Naive thymus-derived CD4-positive, alpha-beta T cell (primary cell): ENCODE measurements at regions of chr20 and their contacts with region 1.

Region 1: GRCh38 chr20:2651772-2652723 is at the start of gene NOP56:
- DNase-seq: peak; percentile 89 to 100 (median 96)
- ATAC-seq: peak; percentile 98
- H3K4me3 ChIP-seq: peak within 1 kb of the TSS; percentile 82
- H3K4me3 Mint-ChIP-seq: peak within 1 kb of the TSS; percentile 87 to 92 (median 90)
- H3K27ac ChIP-seq: peak within 1 kb of the TSS; percentile 90
- H3K27ac Mint-ChIP-seq: peak within 1 kb of the TSS; percentile 85 to 94 (median 90)
- H3K4me1 ChIP-seq: peaks cover 22 to 26% of the 10 kb centered on the region in 2 donors
- H3K4me1 Mint-ChIP-seq: peaks cover 16 to 53% (median 39%) of the 10 kb centered on the region in 7 donors
- H3K27me3 ChIP-seq: no peaks in the 10 kb centered on the region
- H3K27me3 Mint-ChIP-seq: no peaks in the 10 kb centered on the region
- total RNA-seq, gene NOP56: 216 to 375 (median 287) TPM

Region 2: GRCh38 chr20:1392823-1393506 is 1259.1 kb before region 1 on chr20 and contains the start of gene FKBP1A:
- CTCF ChIA-PET with region 1: no interaction called
- POLR2A ChIA-PET with region 1: no interaction called
- intact Hi-C with region 1: loop called in 1 of 2 experiments (anchors 5 kb)
- DNase-seq: peak; percentile 80 to 92 (median 89)
- ATAC-seq: peak; percentile 96
- H3K4me3 ChIP-seq: peak within 1 kb of the TSS; percentile 74
- H3K4me3 Mint-ChIP-seq: peak within 1 kb of the TSS; percentile 79 to 98 (median 94)
- H3K27ac ChIP-seq: peak within 1 kb of the TSS; percentile 82
- H3K27ac Mint-ChIP-seq: peak within 1 kb of the TSS; percentile 91 to 99 (median 96)
- H3K4me1 ChIP-seq: peaks cover 39 to 44% of the 10 kb centered on the region in 2 donors
- H3K4me1 Mint-ChIP-seq: peaks cover 45 to 82% (median 75%) of the 10 kb centered on the region in 7 donors
- H3K27me3 ChIP-seq: no peaks in the 10 kb centered on the region
- H3K27me3 Mint-ChIP-seq: peaks cover 0 to 30% (median 0%) of the 10 kb centered on the region in 5 donors
- total RNA-seq, gene FKBP1A: 74.5 to 253 (median 93.1) TPM

Region 3: GRCh38 chr20:2470423-2471193 is 181.4 kb before region 1 on chr20 and contains the start of gene SNRPB:
- CTCF ChIA-PET with region 1: no interaction called
- POLR2A ChIA-PET with region 1: interaction called, 19 read pairs
- intact Hi-C with region 1: loop called (anchors 1 kb)
- DNase-seq: peak; percentile 87 to 97 (median 96)
- ATAC-seq: peak; percentile 97
- H3K4me3 ChIP-seq: peak within 1 kb of the TSS; percentile 70
- H3K4me3 Mint-ChIP-seq: peak within 1 kb of the TSS; percentile 88 to 99 (median 98)
- H3K27ac ChIP-seq: peak within 1 kb of the TSS; percentile 93
- H3K27ac Mint-ChIP-seq: peak within 1 kb of the TSS; percentile 91 to 100 (median 98)
- H3K4me1 ChIP-seq: peaks cover 17 to 18% of the 10 kb centered on the region in 2 donors
- H3K4me1 Mint-ChIP-seq: peaks cover 27 to 45% (median 39%) of the 10 kb centered on the region in 7 donors
- H3K27me3 ChIP-seq: no peaks in the 10 kb centered on the region
- H3K27me3 Mint-ChIP-seq: peaks cover 0 to 2% (median 0%) of the 10 kb centered on the region in 5 donors
- total RNA-seq, gene SNRPB: 83.5 to 323 (median 118) TPM

Region 4: GRCh38 chr20:2523919-2524708 is 127.9 kb before region 1 on chr20:
- CTCF ChIA-PET with region 1: no interaction called
- POLR2A ChIA-PET with region 1: interaction called, 7 read pairs
- intact Hi-C with region 1: loop called (anchors 1 to 2 kb)
- DNase-seq: peak; percentile 82 to 97 (median 91)
- ATAC-seq: peak; percentile 96
- H3K4me3 ChIP-seq: peak overlapping the region; percentile 92
- H3K4me3 Mint-ChIP-seq: peak overlapping the region; percentile 80 to 94 (median 90)
- H3K27ac ChIP-seq: peak overlapping the region; percentile 76
- H3K27ac Mint-ChIP-seq: peak overlapping the region; percentile 62 to 94 (median 86)
- H3K4me1 ChIP-seq: peaks cover 0 to 5% of the 10 kb centered on the region in 2 donors
- H3K4me1 Mint-ChIP-seq: peaks cover 6 to 24% (median 10%) of the 10 kb centered on the region in 7 donors
- H3K27me3 ChIP-seq: no peaks in the 10 kb centered on the region
- H3K27me3 Mint-ChIP-seq: peaks cover 0 to 4% (median 0%) of the 10 kb centered on the region in 5 donors

Region 5: DNA sequence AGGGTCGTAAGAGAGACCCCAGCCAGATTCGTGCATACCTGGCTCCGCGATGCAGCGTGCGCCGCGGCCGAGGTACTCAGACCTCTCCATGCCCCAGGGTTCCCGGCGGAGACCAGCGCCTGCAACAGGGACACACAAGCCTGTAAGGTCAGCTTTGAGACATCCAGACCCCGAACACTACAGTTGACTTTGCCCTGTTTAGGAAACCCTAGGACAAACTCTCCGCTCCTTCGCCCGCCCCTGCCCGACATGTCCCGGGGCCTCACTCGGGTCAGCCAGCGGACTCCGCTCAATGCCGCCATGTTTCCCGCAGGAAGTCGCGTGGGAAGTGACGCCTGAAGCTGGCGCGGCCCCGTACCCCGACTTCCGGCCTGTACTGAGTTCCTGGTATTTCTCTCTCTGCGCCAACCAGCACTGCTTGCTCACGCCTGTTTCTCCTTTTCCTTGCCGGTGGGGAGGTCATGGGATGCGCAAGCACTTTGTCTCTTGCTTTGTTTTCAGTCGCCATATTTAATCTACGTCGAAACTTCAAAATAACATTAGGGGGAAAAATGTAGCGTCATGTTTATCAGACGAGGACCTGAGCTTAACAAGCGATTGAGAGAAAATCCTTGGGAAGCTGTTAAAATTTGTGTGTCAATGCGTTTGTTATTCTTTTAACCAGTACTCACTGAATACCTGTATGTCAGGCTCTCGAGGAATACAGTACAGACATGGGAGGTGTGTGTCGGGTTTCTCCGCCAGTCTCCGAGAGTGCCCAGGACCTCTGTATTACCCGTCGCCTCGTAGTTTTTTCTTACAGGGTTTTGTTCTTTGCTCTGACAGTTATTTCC is 12.1 kb after region 1 on chr20 and contains the start of gene IDH3B:
- CTCF ChIA-PET with region 1: no interaction called
- POLR2A ChIA-PET with region 1: interaction called, 183 read pairs
- intact Hi-C with region 1: loop called (anchors 1 kb)
- DNase-seq: peak; percentile 76 to 94 (median 90)
- ATAC-seq: peak; percentile 99
- H3K4me3 ChIP-seq: peak within 1 kb of the TSS; percentile 89
- H3K4me3 Mint-ChIP-seq: peak within 1 kb of the TSS; percentile 87 to 97 (median 94)
- H3K27ac ChIP-seq: peak within 1 kb of the TSS; percentile 87
- H3K27ac Mint-ChIP-seq: peak within 1 kb of the TSS; percentile 94 to 99 (median 97)
- H3K4me1 ChIP-seq: peaks cover 10 to 15% of the 10 kb centered on the region in 2 donors
- H3K4me1 Mint-ChIP-seq: peaks cover 4 to 34% (median 29%) of the 10 kb centered on the region in 7 donors
- H3K27me3 ChIP-seq: no peaks in the 10 kb centered on the region
- H3K27me3 Mint-ChIP-seq: peaks cover 0 to 10% (median 0%) of the 10 kb centered on the region in 5 donors
- total RNA-seq, gene IDH3B: 105 to 161 (median 107) TPM

Region 6: DNA sequence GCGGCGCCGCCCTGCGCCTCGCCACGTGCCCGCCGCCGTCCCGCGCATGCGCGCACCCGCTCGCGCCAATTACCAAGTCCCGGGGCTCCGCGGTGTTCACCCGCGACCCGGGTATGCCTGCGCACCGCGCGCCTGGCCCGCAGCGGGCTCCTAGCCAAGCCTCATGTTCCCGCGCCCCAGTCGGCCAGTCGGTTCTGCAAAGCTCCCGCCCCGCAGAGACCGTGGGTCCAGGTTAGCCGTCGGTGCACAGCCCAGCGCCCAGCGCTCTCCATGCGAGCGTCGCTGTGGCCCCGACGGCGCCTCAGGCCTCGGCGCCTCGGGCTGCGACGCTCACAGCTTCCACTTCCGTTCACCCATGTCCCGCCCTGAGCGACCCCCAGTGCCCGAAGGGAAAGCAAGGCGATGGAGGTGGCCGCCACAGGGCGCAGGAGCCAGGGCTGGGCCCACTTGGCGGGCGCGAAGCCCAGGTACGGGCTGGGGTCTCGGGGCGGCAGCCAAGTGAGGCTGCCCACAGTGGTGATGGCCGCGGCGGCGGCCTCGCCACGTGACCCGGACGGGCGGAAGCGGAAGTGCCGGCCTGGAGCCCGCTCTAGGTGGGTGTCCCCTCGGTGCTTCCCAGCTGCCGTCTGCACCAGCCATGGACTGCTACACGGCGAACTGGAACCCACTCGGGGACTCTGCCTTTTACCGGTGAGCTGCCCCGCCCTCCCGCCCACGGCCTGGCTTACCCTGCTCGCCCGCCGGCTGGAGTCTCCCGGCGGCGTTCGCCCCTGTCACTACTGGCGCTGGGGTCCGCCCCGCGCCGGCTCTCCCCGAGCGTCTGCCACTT is 188.3 kb after region 1 on chr20 and contains the starts of genes PCED1A and VPS16:
- CTCF ChIA-PET with region 1: no interaction called
- POLR2A ChIA-PET with region 1: interaction called, 10 read pairs
- intact Hi-C with region 1: loop called in 1 of 2 experiments (anchors 1 kb)
- DNase-seq: peak; percentile 83 to 94 (median 90)
- ATAC-seq: peak; percentile 97
- H3K4me3 ChIP-seq: peak within 1 kb of the TSS; percentile 72
- H3K4me3 Mint-ChIP-seq: peak within 1 kb of the TSS; percentile 83 to 93 (median 90)
- H3K27ac ChIP-seq: peak within 1 kb of the TSS; percentile 77
- H3K27ac Mint-ChIP-seq: peak within 1 kb of the TSS; percentile 67 to 95 (median 92)
- H3K4me1 ChIP-seq: peaks cover 15 to 21% of the 10 kb centered on the region in 2 donors
- H3K4me1 Mint-ChIP-seq: peaks cover 18 to 48% (median 45%) of the 10 kb centered on the region in 7 donors
- H3K27me3 ChIP-seq: no peaks in the 10 kb centered on the region
- H3K27me3 Mint-ChIP-seq: no peaks in the 10 kb centered on the region
- total RNA-seq, gene PCED1A: 27.8 to 105 (median 72.5) TPM
- total RNA-seq, gene VPS16: 45.5 to 62.4 (median 56.1) TPM

Region 7: DNA sequence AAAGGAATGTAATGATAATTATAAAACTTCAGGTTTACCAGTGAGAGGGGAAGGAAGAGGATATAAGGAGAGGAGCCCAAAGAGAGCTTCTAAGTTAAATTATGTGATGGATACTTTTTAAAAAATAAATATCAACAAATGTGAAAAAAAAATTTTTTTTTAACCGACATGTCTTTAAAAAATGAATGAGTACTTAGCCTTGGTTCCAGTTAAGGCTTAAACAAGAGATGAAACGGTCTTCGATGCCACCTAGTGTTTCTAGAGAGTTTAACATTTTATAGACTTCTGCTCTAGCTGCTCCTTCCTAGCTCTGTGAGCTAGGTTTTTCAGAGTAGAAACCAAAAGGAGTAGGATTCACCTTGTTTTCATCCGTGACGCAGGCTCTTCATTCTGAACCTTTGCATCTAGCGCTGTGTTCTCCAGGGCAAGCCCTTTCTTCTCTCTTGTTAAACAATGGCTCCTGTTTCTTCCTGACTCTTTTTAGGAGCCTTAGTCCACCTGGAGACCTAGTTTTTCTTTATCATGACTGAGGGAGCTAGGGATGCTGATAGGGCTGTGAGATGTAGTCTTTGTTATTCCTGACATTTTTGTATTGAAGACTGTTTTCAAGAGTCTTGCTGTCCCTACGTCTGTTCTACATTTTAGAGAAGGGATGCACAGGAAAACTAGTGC is 348.9 kb after region 1 on chr20:
- CTCF ChIA-PET with region 1: no interaction called
- POLR2A ChIA-PET with region 1: no interaction called
- intact Hi-C with region 1: loop called in 1 of 2 experiments (anchors 1 kb)
- DNase-seq: peak in 7 of 9 donors; percentile 11 to 66 (median 49)
- ATAC-seq: peak; percentile 88
- H3K4me3 ChIP-seq: no peak overlapping the region
- H3K4me3 Mint-ChIP-seq: no peak overlapping the region
- H3K27ac ChIP-seq: no peak overlapping the region
- H3K27ac Mint-ChIP-seq: peak overlapping the region in 1 of 9 donors; percentile 18
- H3K4me1 ChIP-seq: no peaks in the 10 kb centered on the region
- H3K4me1 Mint-ChIP-seq: peaks cover 0 to 2% (median 0%) of the 10 kb centered on the region in 7 donors
- H3K27me3 ChIP-seq: no peaks in the 10 kb centered on the region
- H3K27me3 Mint-ChIP-seq: no peaks in the 10 kb centered on the region